Psoas muscle (tissue), 8 donors: ENCODE measurements at regions of chr1 and their contacts with region 1.

Region 1: DNA sequence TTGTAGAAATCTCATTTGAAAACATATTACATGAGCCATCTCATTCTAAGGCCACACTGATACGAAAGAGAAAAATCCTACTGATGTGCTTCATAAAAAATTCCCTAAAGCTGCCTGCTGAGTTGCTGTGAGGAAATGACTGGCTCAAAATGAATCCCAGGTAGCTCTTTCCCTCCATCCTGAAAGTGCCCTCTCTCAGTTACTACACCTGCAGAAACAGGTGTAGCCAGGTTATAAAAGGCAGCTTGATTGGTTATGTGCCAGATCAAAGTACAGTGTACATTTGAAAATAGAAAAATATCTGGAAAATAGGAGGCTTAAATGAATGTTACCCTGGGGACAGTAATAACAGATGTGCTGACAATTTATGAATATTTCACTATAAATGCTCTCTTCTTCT is 833.4 kb upstream of the ADGRL4 start:
- DNase-seq: no peak
- ATAC-seq: no peak
- H3K4me3 ChIP-seq: no peak overlapping the region
- H3K27ac ChIP-seq: no peak overlapping the region
- H3K4me1 ChIP-seq: no peaks in the 10 kb centered on the region
- H3K27me3 ChIP-seq: no peaks in the 10 kb centered on the region
- CTCF ChIP-seq: no peak

Region 2: GRCh38 chr1:79777481-79778219 is 62.2 kb before region 1 on chr1:
- intact Hi-C with region 1: loop called in 1 of 2 experiments (anchors 10 kb)
- DNase-seq: no peak
- ATAC-seq: no peak
- H3K4me3 ChIP-seq: no peak overlapping the region
- H3K27ac ChIP-seq: no peak overlapping the region
- H3K4me1 ChIP-seq: no peaks in the 10 kb centered on the region
- H3K27me3 ChIP-seq: no peaks in the 10 kb centered on the region
- CTCF ChIP-seq: no peak